Naive thymus-derived CD4-positive, alpha-beta T cell (primary cell): ENCODE measurements at regions of chr16 and their contacts with region 1.

Region 1: DNA sequence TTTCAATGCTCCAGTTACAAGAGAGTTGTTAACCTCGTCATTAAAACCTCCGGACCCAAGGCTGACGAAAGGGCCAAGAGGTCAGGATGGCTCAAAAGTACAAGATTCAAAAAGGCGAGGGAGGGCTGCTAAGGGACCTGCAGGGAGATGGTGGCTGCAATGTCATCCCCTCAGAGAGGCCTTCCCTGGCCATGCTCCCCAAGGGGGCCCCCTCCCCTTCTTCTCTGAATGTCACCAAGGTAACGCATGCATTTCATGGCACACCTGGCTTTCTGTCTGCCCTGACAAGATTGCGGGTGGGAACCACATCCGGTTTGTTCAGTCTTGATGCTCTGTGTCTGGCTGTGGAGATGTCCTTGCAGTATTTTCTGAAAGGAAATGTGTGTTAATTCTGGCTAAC is 89.9 kb downstream of the C16orf78 start:
- DNase-seq: peak; percentile 18 to 94 (median 89)
- ATAC-seq: peak; percentile 86
- H3K4me3 ChIP-seq: peak overlapping the region; percentile 15
- H3K4me3 Mint-ChIP-seq: peak overlapping the region; percentile 64 to 90 (median 79)
- H3K27ac ChIP-seq: peak overlapping the region; percentile 70
- H3K27ac Mint-ChIP-seq: peak overlapping the region; percentile 77 to 99 (median 95)
- H3K4me1 ChIP-seq: peaks cover 27 to 49% of the 10 kb centered on the region in 2 donors
- H3K4me1 Mint-ChIP-seq: peaks cover 12 to 80% (median 67%) of the 10 kb centered on the region in 7 donors
- H3K27me3 ChIP-seq: no peaks in the 10 kb centered on the region
- H3K27me3 Mint-ChIP-seq: peaks cover 0 to 17% (median 0%) of the 10 kb centered on the region in 5 donors

Region 2: DNA sequence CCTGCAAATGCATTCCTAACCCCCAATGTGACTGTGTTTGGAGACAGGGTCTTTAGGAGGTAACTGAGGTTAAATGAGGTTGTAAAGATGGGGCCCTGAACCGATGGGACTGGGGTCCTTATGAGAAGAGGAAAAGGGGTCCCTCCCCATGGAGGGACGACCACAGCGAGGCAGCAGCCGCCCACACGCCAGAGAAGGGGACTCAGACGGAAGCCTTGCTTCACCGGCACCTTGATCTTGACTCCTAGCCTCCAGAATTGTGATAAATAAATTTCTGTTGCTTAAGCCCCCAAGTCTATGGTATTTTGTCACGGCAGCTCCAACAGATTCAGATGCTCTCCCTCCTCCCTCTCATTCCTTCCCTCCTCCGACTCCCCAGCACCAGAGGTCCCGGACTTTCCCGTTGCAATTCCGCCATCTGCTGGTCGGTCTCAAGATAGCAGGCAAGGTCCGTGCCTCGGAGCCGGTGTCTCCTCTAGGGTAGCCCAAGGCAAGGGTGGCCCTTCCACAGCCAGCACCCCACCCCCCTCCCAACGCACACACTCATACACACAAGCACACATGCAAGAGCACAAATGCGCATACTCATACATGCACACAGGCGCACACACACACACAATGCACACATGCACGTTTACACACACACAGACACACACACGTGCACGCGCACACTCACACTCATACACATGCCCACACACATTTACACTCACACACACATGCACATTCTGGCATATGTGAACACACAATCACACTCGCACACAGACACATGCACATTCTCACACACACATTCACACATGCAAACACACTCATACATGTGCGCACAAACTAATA is 113.0 kb before region 1 on chr16:
- CTCF ChIA-PET with region 1: no interaction called
- POLR2A ChIA-PET with region 1: no interaction called
- intact Hi-C with region 1: no loop called
- DNase-seq: peak in 5 of 9 donors; percentile 8 to 59 (median 22)
- ATAC-seq: peak; percentile 41
- H3K4me3 ChIP-seq: no peak overlapping the region
- H3K4me3 Mint-ChIP-seq: no peak overlapping the region
- H3K27ac ChIP-seq: no peak overlapping the region
- H3K27ac Mint-ChIP-seq: no peak overlapping the region
- H3K4me1 ChIP-seq: no peaks in the 10 kb centered on the region
- H3K4me1 Mint-ChIP-seq: peaks cover 0 to 7% (median 4%) of the 10 kb centered on the region in 7 donors
- H3K27me3 ChIP-seq: no peaks in the 10 kb centered on the region
- H3K27me3 Mint-ChIP-seq: peaks cover 2 to 38% (median 26%) of the 10 kb centered on the region in 5 donors

Region 3: DNA sequence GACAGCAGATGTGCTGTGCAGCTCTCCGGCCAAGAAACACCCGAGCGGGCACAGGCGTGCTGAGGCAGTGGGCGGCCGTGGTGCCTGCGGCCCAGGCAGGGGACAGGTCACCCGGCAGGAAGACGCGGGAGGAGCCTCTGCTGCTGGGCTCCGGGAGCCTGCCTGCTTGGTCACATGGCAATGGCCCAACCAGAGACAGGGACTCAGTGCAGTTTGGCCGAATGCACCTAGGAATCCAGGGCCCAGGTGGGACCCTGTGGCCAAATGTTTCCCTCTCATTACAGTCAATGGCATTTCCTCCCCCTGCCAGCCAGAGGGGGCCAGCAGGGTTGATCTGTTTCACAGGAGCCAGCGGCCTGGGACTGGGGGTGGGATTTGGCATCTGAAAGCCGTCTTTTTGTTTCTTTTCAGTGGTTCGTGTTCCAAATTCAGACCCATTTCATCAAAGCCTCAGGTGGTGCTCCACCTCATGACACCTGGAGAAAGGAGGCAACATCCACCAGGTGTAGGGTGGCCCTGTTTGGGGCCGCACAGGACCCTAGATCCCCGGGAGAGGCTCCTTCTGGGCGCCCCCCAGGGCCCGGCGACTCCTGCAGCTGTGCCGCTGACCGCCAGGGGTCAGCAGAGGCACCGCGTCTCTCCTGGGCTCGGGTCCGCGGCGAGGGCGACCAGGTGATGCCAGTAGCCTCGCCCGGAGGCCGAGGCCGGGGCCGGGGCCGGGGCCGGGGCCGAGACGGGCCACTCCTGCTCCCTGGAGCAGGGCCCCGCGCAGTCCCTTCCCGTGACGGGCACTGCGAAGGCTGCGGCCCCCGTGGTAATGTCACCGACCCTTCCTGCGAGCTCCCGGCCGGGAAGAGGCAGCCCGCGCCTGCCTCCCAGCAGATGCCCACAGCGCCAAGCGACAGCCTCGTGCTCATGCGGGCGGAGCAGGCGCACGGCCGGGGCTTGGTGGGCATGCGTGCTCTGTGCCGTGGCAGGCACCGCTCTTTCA is 28.5 kb after region 1 on chr16:
- CTCF ChIA-PET with region 1: interaction called, 4 read pairs
- POLR2A ChIA-PET with region 1: no interaction called
- intact Hi-C with region 1: loop called in 1 of 2 experiments (anchors 1 kb)
- DNase-seq: peak in 8 of 9 donors; percentile 20 to 63 (median 40)
- ATAC-seq: peak; percentile 60
- H3K4me3 ChIP-seq: no peak overlapping the region
- H3K4me3 Mint-ChIP-seq: peak overlapping the region in 7 of 10 donors; percentile 12 to 66 (median 39)
- H3K27ac ChIP-seq: no peak overlapping the region
- H3K27ac Mint-ChIP-seq: no peak overlapping the region
- H3K4me1 ChIP-seq: no peaks in the 10 kb centered on the region
- H3K4me1 Mint-ChIP-seq: peaks cover 0 to 15% (median 6%) of the 10 kb centered on the region in 7 donors
- H3K27me3 ChIP-seq: no peaks in the 10 kb centered on the region
- H3K27me3 Mint-ChIP-seq: no peaks in the 10 kb centered on the region

Region 4: DNA sequence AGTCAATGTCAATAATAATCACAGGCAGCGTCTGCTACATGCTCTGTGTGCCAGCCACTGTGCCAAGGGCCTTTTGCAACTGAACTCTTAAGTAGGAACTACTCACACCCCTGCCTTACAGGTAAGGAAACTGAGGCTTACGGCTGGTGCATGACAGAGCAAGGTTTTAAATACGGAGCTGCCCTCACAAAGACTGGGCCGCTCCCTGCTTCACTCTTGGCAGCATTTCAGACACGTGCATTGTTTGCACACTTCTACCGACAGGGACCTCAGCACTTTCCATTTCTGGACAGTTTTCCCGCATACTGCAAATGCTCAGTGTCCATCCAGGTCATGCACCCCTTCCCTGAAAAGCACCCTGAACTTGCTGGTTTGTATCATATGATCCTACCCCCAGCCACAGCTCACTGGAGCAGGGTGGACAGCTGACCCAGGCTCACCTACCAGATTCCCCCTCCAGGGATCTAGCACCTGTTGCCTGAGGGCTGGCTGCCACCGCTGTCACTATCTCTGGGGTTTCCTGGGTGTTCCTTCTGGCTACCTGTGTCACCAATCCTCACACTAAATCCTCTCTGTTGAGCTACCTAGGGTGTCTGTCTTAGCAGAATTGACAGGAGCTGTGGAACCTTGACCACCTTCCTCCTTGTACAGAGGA is 53.0 kb after region 1 on chr16:
- CTCF ChIA-PET with region 1: no interaction called
- POLR2A ChIA-PET with region 1: no interaction called
- intact Hi-C with region 1: no loop called
- DNase-seq: no peak
- ATAC-seq: no peak
- H3K4me3 ChIP-seq: no peak overlapping the region
- H3K4me3 Mint-ChIP-seq: no peak overlapping the region
- H3K27ac ChIP-seq: no peak overlapping the region
- H3K27ac Mint-ChIP-seq: peak overlapping the region in 1 of 9 donors; percentile 62
- H3K4me1 ChIP-seq: no peaks in the 10 kb centered on the region
- H3K4me1 Mint-ChIP-seq: no peaks in the 10 kb centered on the region
- H3K27me3 ChIP-seq: no peaks in the 10 kb centered on the region
- H3K27me3 Mint-ChIP-seq: no peaks in the 10 kb centered on the region

Region 5: GRCh38 chr16:49528060-49528865 is 64.7 kb after region 1 on chr16:
- CTCF ChIA-PET with region 1: no interaction called
- POLR2A ChIA-PET with region 1: no interaction called
- intact Hi-C with region 1: loop called in 1 of 2 experiments (anchors 1 kb)
- DNase-seq: peak in 6 of 9 donors; percentile 7 to 42 (median 31)
- ATAC-seq: peak; percentile 55
- H3K4me3 ChIP-seq: peak overlapping the region; percentile 56
- H3K4me3 Mint-ChIP-seq: peak overlapping the region; percentile 73 to 95 (median 88)
- H3K27ac ChIP-seq: peak overlapping the region; percentile 66
- H3K27ac Mint-ChIP-seq: peak overlapping the region; percentile 38 to 98 (median 94)
- H3K4me1 ChIP-seq: no peaks in the 10 kb centered on the region
- H3K4me1 Mint-ChIP-seq: peaks cover 6 to 26% (median 16%) of the 10 kb centered on the region in 7 donors
- H3K27me3 ChIP-seq: no peaks in the 10 kb centered on the region
- H3K27me3 Mint-ChIP-seq: peaks cover 0 to 8% (median 0%) of the 10 kb centered on the region in 5 donors

Region 6: GRCh38 chr16:49631187-49632041 is 167.9 kb after region 1 on chr16:
- CTCF ChIA-PET with region 1: no interaction called
- POLR2A ChIA-PET with region 1: no interaction called
- intact Hi-C with region 1: no loop called
- DNase-seq: no peak
- ATAC-seq: no peak
- H3K4me3 ChIP-seq: no peak overlapping the region
- H3K4me3 Mint-ChIP-seq: no peak overlapping the region
- H3K27ac ChIP-seq: no peak overlapping the region
- H3K27ac Mint-ChIP-seq: no peak overlapping the region
- H3K4me1 ChIP-seq: no peaks in the 10 kb centered on the region
- H3K4me1 Mint-ChIP-seq: no peaks in the 10 kb centered on the region
- H3K27me3 ChIP-seq: no peaks in the 10 kb centered on the region
- H3K27me3 Mint-ChIP-seq: no peaks in the 10 kb centered on the region

Region 7: GRCh38 chr16:49716339-49716934 is 252.9 kb after region 1 on chr16:
- CTCF ChIA-PET with region 1: no interaction called
- POLR2A ChIA-PET with region 1: no interaction called
- intact Hi-C with region 1: no loop called
- DNase-seq: no peak
- ATAC-seq: no peak
- H3K4me3 ChIP-seq: no peak overlapping the region
- H3K4me3 Mint-ChIP-seq: no peak overlapping the region
- H3K27ac ChIP-seq: no peak overlapping the region
- H3K27ac Mint-ChIP-seq: no peak overlapping the region
- H3K4me1 ChIP-seq: no peaks in the 10 kb centered on the region
- H3K4me1 Mint-ChIP-seq: peaks cover 0 to 2% (median 0%) of the 10 kb centered on the region in 7 donors
- H3K27me3 ChIP-seq: no peaks in the 10 kb centered on the region
- H3K27me3 Mint-ChIP-seq: peaks cover 0 to 6% (median 0%) of the 10 kb centered on the region in 5 donors